ENCODE measurements at regions of chr7 and their contacts with region 1.

Region 1: DNA sequence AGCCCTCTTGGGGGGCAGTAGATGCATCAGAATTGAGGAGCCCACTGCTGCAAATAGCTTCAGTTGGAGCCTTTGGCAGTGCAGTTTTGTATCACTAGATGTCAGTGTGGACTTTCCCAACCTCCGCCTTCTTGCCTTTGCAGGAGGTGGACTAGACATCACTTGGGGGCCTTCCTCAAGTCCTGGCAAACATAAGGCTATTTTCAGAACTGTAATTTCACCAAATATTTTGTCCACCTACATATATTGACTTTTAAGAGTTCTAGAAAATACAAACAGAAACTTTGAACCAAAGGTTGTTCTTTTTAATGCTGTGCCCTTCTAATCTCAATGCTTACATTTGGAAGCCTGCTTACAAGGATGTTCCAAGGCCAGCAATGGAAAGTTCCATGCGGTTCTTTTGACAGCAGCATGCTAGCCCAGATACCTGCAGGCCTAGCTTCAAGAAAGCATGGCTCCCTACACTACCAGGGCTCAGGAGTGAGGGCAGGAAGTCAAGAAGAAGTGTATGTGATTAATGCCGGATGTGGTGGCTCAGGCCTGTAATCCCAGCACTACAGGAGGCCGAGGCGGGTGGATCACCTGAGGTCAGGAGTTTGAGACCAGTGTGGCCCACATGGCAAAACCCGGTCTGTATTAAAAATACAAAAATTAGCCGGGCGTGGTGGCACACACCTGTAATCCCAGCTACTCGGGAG is 8.0 kb upstream of the ZNRF2 start:
- DNase-seq: peak; percentile 63
- H3K4me3 Mint-ChIP-seq: no peak overlapping the region
- H3K27ac Mint-ChIP-seq: no peak overlapping the region
- H3K4me1 Mint-ChIP-seq: peaks cover 6% of the 10 kb centered on the region
- H3K27me3 Mint-ChIP-seq: no peaks in the 10 kb centered on the region
- CTCF ChIP-seq: peak; percentile 76

Region 2: GRCh38 chr7:29574659-29575058 is 701.7 kb before region 1 on chr7:
- CTCF ChIA-PET with region 1: no interaction called
- POLR2A ChIA-PET with region 1: no interaction called
- intact Hi-C with region 1: no loop called
- DNase-seq: no peak
- H3K4me3 Mint-ChIP-seq: no peak overlapping the region
- H3K27ac Mint-ChIP-seq: no peak overlapping the region
- H3K4me1 Mint-ChIP-seq: peaks cover 5% of the 10 kb centered on the region
- H3K27me3 Mint-ChIP-seq: no peaks in the 10 kb centered on the region
- CTCF ChIP-seq: no peak

Region 3: DNA sequence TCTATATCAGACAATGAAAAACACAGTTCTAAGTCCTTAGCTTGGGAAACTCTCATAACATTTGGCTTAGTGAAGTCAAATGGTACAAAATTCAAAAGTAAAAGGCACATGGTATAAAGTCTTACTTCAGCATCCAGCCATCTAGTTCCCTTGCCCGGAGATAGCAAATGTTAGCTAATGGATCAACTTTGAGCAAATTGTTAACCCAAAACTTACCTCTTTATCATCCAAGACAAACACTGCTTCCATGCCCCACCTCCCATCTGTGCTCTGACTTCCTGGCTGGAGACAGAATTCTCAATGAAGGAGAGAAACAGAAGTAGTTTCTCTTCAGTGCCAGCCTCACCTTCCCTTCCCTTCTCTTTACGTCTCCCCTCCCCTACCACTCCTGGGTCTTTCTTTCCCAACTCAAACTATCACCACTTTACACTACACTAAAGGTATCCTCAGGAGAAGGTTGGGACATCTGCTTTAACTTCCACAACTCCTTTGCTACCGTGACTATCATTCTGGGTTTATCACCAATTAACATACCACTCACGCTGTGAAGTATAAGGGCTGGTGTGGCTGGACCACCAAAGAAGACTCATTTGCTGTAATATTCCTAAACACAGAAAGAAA is 13.2 kb before region 1 on chr7:
- CTCF ChIA-PET with region 1: interaction called, 17 read pairs
- POLR2A ChIA-PET with region 1: interaction called, 3 read pairs
- intact Hi-C with region 1: no loop called
- DNase-seq: no peak
- H3K4me3 Mint-ChIP-seq: no peak overlapping the region
- H3K27ac Mint-ChIP-seq: no peak overlapping the region
- H3K4me1 Mint-ChIP-seq: no peaks in the 10 kb centered on the region
- H3K27me3 Mint-ChIP-seq: no peaks in the 10 kb centered on the region
- CTCF ChIP-seq: no peak

Region 4: GRCh38 chr7:30412810-30413504 is 136.6 kb after region 1 on chr7:
- CTCF ChIA-PET with region 1: interaction called, 64 read pairs
- POLR2A ChIA-PET with region 1: no interaction called
- intact Hi-C with region 1: loop called (anchors 1 kb)
- DNase-seq: peak; percentile 90
- H3K4me3 Mint-ChIP-seq: no peak overlapping the region
- H3K27ac Mint-ChIP-seq: no peak overlapping the region
- H3K4me1 Mint-ChIP-seq: peaks cover 10% of the 10 kb centered on the region
- H3K27me3 Mint-ChIP-seq: no peaks in the 10 kb centered on the region
- CTCF ChIP-seq: peak; percentile 54

Region 5: DNA sequence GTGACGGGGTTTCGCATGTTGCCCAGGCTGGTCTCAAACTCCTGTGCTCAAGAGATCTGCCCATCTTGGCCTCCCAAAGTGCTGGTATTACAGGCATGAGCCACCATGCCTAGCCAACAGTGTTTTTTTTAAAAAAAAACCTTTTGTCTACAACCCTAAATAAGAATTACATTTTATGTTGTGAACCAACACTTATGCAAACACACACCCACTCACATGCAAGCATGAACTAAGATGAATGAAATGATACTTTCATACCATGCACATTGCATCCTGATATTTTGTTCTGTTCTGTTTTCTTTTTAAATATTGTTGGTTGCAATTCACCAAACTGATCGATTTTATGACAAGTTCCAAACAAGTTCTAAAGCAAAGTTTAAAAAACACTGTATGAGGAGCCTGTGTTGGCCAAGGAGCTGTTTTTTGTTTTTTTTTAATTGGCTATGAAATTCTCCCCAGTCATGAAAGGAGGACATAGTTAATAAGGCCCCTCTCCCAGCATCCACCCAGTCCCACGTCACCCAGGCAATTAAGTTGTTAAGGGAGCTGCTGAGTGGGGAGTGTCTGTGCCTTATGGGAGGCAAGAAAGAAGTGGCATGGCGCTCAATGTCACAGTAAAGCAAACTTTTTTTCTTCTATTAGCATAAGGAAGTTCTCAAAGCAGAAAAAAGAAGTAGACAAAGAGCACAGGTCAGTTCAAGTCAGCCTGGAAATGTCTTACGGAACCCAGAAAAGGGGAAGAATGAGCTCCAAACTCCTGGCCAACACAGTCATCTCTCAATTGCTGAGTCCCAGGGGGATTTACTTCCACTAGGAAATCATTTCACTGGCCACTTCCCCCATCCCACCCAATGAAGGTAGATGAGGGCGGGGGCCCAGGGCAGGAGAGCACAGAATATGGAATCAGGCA is 152.1 kb after region 1 on chr7:
- CTCF ChIA-PET with region 1: interaction called, 10 read pairs
- POLR2A ChIA-PET with region 1: interaction called, 5 read pairs
- intact Hi-C with region 1: no loop called
- DNase-seq: no peak
- H3K4me3 Mint-ChIP-seq: no peak overlapping the region
- H3K27ac Mint-ChIP-seq: no peak overlapping the region
- H3K4me1 Mint-ChIP-seq: no peaks in the 10 kb centered on the region
- H3K27me3 Mint-ChIP-seq: no peaks in the 10 kb centered on the region
- CTCF ChIP-seq: no peak